CD8-positive, alpha-beta T cell (primary cell): ENCODE measurements at regions of chr2 and their contacts with region 1.

Region 1: GRCh38 chr2:212078103-212078502 is 460.5 kb downstream of the ERBB4 start:
- DNase-seq: peak in 1 of 9 experiments; percentile 3
- ATAC-seq: no peak
- H3K4me3 ChIP-seq: no peak overlapping the region
- H3K4me3 Mint-ChIP-seq: no peak overlapping the region
- H3K27ac ChIP-seq: no peak overlapping the region
- H3K27ac Mint-ChIP-seq: no peak overlapping the region
- H3K4me1 ChIP-seq: no peaks in the 10 kb centered on the region
- H3K4me1 Mint-ChIP-seq: no peaks in the 10 kb centered on the region
- H3K27me3 ChIP-seq: no peaks in the 10 kb centered on the region
- H3K27me3 Mint-ChIP-seq: no peaks in the 10 kb centered on the region
- CTCF ChIP-seq: no peak

Region 2: DNA sequence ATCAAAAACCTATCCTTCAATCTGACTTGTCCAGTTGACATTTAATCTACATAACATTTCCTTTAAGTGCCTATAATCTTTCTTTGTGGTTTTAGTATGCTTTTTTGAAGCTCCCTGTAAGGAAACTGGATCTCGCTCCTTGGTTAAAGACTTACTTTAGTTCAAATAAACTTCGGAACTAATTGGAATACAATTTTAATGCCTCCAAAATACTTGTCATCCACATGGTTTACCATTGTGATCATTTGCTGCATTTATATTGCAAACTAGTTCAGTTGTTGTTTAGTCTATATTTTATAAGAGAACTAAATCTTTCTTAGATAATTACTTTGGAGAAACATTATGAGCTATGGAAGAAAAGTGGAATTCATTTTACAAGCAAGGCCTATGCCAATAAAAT is 35.5 kb before region 1 on chr2:
- CTCF ChIA-PET with region 1: no interaction called
- POLR2A ChIA-PET with region 1: no interaction called
- intact Hi-C with region 1: loop called in 1 of 2 experiments (anchors 1 kb)
- DNase-seq: no peak
- ATAC-seq: no peak
- H3K4me3 ChIP-seq: no peak overlapping the region
- H3K4me3 Mint-ChIP-seq: no peak overlapping the region
- H3K27ac ChIP-seq: no peak overlapping the region
- H3K27ac Mint-ChIP-seq: no peak overlapping the region
- H3K4me1 ChIP-seq: no peaks in the 10 kb centered on the region
- H3K4me1 Mint-ChIP-seq: no peaks in the 10 kb centered on the region
- H3K27me3 ChIP-seq: no peaks in the 10 kb centered on the region
- H3K27me3 Mint-ChIP-seq: no peaks in the 10 kb centered on the region
- CTCF ChIP-seq: no peak